Heart right ventricle (tissue), 16 donors: ENCODE measurements at regions of chr11 and their contacts with region 1.

Region 1: DNA sequence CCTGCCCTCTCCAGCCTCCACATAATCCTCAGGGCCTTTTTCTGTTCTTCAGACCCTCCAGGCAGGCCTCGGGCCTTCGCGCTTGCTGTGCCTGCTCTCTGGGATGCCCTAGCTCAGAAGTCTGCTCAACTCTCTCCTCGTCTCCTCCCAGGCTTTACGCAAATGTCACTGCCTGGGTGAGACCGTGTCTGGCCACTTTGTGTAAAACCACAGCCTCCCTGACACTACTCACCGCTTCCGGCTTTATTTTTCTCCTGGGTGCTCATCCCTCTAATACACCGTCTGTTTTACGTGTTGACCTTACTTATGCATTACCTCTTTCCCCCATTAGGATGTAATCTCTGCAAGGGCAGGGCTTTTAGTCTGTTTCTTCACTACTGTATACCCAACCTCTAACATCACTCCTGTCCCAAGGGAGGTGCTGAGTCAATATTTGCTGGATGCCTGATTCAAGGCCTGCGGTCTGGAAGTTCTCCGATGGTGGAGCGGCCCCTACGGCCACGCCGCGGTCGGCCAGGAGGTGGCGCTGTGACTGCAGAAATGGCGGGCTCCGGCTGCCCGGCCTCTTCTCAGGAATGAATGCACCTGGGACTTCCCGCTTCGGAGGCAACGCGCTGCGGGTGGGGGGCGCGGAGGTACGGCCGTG is 58.2 kb upstream of the THY1 start:
- DNase-seq: peak; percentile 75 to 82
- ATAC-seq: peak; percentile 69 to 93 (median 86)
- H3K4me3 ChIP-seq: peak overlapping the region in 1 of 10 donors; percentile 11
- H3K27ac ChIP-seq: no peak overlapping the region
- H3K4me1 ChIP-seq: peaks cover 0 to 9% (median 4%) of the 10 kb centered on the region in 9 donors
- H3K27me3 ChIP-seq: peaks cover 0 to 21% (median 4%) of the 10 kb centered on the region in 7 donors
- CTCF ChIP-seq: peak; percentile 90 to 99 (median 97)

Region 2: DNA sequence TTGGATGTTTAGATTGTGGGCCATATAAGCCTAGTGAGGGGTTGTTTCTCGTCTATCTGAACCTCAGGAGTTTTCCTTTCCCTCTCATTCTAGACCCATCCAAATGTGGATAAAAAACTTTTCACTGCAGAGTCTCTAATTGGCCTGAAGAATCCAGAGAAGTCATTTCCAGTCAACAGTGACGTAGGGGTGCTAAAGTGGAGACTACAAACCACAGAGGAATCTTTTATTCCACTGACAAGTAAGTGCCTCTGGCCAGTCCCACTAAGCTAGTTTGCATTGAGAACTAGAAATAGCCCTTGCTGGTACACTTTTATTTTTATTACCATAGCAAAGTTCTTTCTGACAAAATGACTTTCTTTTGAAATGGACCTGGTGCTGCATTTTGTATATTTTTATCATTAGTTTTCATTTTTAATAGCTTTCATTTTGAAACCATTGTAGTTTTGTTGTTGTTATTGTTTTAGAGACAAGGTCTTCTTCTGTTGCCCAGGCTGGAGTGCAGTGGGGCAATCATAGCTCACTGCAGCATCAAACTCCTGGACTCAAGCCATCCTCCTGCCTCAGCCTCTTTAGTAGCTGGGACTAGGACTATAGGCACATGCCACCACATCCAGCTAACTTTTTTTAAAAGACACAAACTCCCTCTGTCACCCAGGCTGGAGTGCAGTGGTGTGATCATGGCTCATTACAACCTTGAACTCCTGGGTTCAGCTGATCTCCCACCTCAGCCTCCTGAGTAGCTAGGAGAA is 888.4 kb before region 1 on chr11:
- intact Hi-C with region 1: no loop called
- DNase-seq: peak in 1 of 2 donors; percentile 28
- ATAC-seq: peak in 6 of 8 donors; percentile 77 to 86 (median 80)
- H3K4me3 ChIP-seq: no peak overlapping the region
- H3K27ac ChIP-seq: peak overlapping the region; percentile 0 to 87 (median 70)
- H3K4me1 ChIP-seq: peaks cover 6 to 49% (median 27%) of the 10 kb centered on the region in 9 donors
- H3K27me3 ChIP-seq: no peaks in the 10 kb centered on the region
- CTCF ChIP-seq: no peak

Region 3: GRCh38 chr11:118980191-118980881 is 500.8 kb before region 1 on chr11:
- intact Hi-C with region 1: no loop called
- DNase-seq: peak; percentile 34 to 42
- ATAC-seq: peak; percentile 54 to 82 (median 72)
- H3K4me3 ChIP-seq: peak overlapping the region in 7 of 10 donors; percentile 1 to 30 (median 12)
- H3K27ac ChIP-seq: peak overlapping the region in 1 of 10 donors; percentile 4
- H3K4me1 ChIP-seq: peaks cover 0 to 17% (median 6%) of the 10 kb centered on the region in 9 donors
- H3K27me3 ChIP-seq: no peaks in the 10 kb centered on the region
- CTCF ChIP-seq: no peak

Region 4: GRCh38 chr11:119434591-119435330 is 46.4 kb before region 1 on chr11:
- intact Hi-C with region 1: no loop called
- DNase-seq: no peak
- ATAC-seq: no peak
- H3K4me3 ChIP-seq: no peak overlapping the region
- H3K27ac ChIP-seq: no peak overlapping the region
- H3K4me1 ChIP-seq: peaks cover 0 to 12% (median 0%) of the 10 kb centered on the region in 9 donors
- H3K27me3 ChIP-seq: peaks cover 0 to 5% (median 0%) of the 10 kb centered on the region in 7 donors
- CTCF ChIP-seq: no peak

Region 5: GRCh38 chr11:119445850-119446249 is 35.3 kb before region 1 on chr11:
- intact Hi-C with region 1: no loop called
- DNase-seq: no peak
- ATAC-seq: no peak
- H3K4me3 ChIP-seq: no peak overlapping the region
- H3K27ac ChIP-seq: no peak overlapping the region
- H3K4me1 ChIP-seq: peaks cover 0 to 10% (median 0%) of the 10 kb centered on the region in 9 donors
- H3K27me3 ChIP-seq: peaks cover 0 to 7% (median 0%) of the 10 kb centered on the region in 7 donors
- CTCF ChIP-seq: no peak

Region 6: DNA sequence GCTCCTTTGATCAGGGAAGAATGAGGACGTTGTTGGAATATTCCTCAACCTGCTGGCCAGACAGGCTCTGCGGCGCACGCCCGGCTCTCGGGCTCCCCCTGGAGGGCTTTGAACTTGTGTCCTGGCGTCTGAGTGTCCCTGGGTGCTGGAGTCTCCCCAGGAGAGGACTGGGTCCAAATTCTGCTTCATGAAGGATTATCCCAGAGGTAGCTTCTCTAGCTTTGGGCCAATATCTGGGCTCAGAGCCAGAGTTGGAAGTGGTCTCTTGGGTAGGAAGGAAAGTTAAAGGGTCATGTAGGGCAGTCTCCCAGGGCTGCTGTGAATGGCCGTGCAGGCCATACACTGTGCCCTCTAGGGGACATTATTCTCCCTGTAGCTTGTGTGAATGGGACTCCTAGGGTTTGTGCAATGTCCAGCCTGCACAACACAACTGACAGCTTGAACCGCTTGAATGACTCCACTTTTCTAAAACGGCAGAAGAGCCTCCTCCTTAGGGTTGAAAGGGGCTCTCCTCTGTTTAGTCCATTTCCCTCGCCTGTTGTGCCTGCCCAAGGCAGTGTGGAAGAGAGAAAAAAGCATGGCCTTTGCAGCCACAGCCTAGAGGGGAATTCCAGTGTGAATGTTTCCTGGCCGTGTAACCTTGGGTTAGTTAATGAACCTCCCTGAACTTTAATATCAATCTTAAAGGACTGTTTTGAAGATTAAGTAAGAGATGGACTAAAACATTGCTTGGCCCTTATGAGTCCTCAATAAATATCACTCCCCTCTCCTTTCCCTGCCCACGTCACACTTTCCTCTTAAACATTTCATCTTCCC is 53.0 kb after region 1 on chr11:
- intact Hi-C with region 1: loop called in 4 of 10 experiments (anchors 5 to 10 kb)
- DNase-seq: peak; percentile 47 to 76
- ATAC-seq: peak; percentile 72 to 88 (median 78)
- H3K4me3 ChIP-seq: no peak overlapping the region
- H3K27ac ChIP-seq: no peak overlapping the region
- H3K4me1 ChIP-seq: peaks cover 0 to 10% (median 0%) of the 10 kb centered on the region in 9 donors
- H3K27me3 ChIP-seq: peaks cover 0 to 43% (median 10%) of the 10 kb centered on the region in 7 donors
- CTCF ChIP-seq: peak; percentile 50 to 90 (median 84)

Region 7: GRCh38 chr11:119641983-119642745 is 161.0 kb after region 1 on chr11:
- intact Hi-C with region 1: loop called in 1 of 10 experiments (anchors 10 kb)
- DNase-seq: no peak
- ATAC-seq: no peak
- H3K4me3 ChIP-seq: no peak overlapping the region
- H3K27ac ChIP-seq: no peak overlapping the region
- H3K4me1 ChIP-seq: no peaks in the 10 kb centered on the region
- H3K27me3 ChIP-seq: peaks cover 0 to 35% (median 9%) of the 10 kb centered on the region in 7 donors
- CTCF ChIP-seq: peak in 8 of 9 donors; percentile 8 to 50 (median 40)

Region 8: DNA sequence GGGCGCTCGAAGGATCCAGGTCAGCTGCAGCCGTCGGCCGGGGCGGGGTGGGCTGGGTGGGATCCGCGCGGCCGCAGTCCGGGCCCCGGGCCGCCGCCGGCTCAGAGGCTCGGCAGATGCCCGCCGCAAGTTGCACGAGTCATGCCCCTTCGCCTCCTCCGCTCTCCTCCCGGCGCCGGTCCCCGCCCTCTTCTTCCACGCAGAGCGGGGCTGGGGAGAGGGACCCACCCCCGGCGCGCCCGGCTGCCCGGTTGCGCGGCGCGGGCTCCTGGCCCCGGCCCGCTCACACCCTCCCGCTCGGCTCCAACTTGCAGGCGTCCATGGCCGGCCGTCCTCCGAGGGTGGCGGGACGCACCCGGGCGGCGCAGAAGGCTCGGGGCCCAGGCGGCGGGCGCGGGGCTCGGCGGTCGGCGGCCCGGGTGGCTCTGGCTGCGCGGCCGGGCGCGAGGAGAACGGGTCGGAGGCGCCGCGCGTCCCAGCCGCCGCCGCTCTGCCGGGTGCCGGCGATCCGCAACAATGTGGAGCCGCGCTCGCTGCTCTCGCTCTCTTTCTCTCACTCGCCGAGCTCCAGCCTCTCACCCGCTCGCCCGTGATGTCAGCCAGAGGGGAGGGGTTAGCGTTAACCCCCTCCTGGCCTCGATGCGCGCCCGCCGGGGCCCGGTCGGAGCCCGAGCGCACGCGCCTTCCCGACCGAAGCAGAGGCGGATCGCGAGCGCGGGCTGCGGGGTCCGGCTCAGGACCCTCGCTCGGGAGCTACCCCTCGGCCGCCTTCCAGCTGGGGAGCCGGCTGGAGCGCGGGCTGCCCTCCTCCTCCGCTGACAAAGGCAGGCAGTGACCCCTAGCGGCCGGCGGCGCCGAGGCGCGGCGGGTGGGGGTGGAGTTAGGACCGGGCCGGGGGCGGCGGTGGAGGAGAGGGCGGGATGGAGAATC is 247.8 kb after region 1 on chr11 and contains the start of gene NECTIN1:
- intact Hi-C with region 1: loop called in 4 of 10 experiments (anchors 5 to 10 kb)
- DNase-seq: peak; percentile 90 to 91
- ATAC-seq: peak; percentile 91 to 96 (median 94)
- H3K4me3 ChIP-seq: peak within 1 kb of the TSS; percentile 64 to 93 (median 80)
- H3K27ac ChIP-seq: peak within 1 kb of the TSS; percentile 75 to 91 (median 84)
- H3K4me1 ChIP-seq: peaks cover 3 to 36% (median 32%) of the 10 kb centered on the region in 9 donors
- H3K27me3 ChIP-seq: peaks cover 0 to 14% (median 0%) of the 10 kb centered on the region in 7 donors
- CTCF ChIP-seq: peak; percentile 94 to 100 (median 99)
- total RNA-seq, gene NECTIN1: 6.6 to 22.8 (median 11.6) TPM

Region 9: GRCh38 chr11:119741369-119742262 is 260.5 kb after region 1 on chr11:
- intact Hi-C with region 1: loop called in 1 of 10 experiments (anchors 10 kb)
- DNase-seq: peak; percentile 45 to 73
- ATAC-seq: peak; percentile 70 to 89 (median 81)
- H3K4me3 ChIP-seq: peak overlapping the region in 6 of 10 donors; percentile 10 to 33 (median 30)
- H3K27ac ChIP-seq: no peak overlapping the region
- H3K4me1 ChIP-seq: peaks cover 0 to 15% (median 7%) of the 10 kb centered on the region in 9 donors
- H3K27me3 ChIP-seq: peaks cover 0 to 51% (median 31%) of the 10 kb centered on the region in 7 donors
- CTCF ChIP-seq: peak; percentile 61 to 90 (median 84)

Region 10: DNA sequence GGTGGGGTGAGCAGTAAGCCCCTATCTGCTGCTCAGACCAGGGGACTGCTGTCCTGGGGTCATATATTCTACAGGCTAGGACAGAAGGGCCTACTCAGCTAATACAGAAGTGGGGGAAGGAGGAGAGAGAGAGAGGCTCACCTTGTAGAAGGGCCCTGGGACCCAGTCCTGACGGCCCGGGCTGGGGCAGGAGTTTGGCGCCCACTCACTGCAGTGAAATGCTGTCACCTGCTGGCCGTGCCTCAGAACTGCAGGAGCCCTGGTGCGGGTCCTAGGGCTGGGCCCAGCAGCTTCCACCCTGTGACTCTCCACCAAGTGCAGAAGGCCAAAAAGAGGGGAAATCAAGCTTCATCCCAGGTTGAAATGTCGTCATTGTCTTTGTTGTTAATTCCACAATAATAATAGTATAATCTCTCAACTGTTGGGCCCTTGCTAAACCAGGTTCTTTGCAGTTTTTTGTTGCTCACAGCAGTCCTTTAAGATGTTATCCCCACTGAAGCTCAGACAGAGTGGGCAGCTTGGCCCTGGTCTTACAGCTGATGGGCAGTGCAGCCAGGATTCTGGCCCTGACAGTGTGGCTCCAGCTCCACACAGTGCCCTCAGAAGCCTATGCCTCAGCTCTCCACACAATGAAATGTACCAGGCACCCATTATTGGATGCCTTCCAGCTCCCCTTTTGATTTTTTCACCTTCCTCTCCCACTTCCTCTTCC is 627.2 kb after region 1 on chr11:
- intact Hi-C with region 1: loop called (anchors 1 to 10 kb)
- DNase-seq: peak; percentile 48 to 71
- ATAC-seq: peak; percentile 77 to 94 (median 86)
- H3K4me3 ChIP-seq: no peak overlapping the region
- H3K27ac ChIP-seq: no peak overlapping the region
- H3K4me1 ChIP-seq: no peaks in the 10 kb centered on the region
- H3K27me3 ChIP-seq: peaks cover 0 to 36% (median 13%) of the 10 kb centered on the region in 7 donors
- CTCF ChIP-seq: peak; percentile 94 to 100 (median 99)